ENCODE measurements at regions of chr9 and their contacts with region 1.

Region 1: DNA sequence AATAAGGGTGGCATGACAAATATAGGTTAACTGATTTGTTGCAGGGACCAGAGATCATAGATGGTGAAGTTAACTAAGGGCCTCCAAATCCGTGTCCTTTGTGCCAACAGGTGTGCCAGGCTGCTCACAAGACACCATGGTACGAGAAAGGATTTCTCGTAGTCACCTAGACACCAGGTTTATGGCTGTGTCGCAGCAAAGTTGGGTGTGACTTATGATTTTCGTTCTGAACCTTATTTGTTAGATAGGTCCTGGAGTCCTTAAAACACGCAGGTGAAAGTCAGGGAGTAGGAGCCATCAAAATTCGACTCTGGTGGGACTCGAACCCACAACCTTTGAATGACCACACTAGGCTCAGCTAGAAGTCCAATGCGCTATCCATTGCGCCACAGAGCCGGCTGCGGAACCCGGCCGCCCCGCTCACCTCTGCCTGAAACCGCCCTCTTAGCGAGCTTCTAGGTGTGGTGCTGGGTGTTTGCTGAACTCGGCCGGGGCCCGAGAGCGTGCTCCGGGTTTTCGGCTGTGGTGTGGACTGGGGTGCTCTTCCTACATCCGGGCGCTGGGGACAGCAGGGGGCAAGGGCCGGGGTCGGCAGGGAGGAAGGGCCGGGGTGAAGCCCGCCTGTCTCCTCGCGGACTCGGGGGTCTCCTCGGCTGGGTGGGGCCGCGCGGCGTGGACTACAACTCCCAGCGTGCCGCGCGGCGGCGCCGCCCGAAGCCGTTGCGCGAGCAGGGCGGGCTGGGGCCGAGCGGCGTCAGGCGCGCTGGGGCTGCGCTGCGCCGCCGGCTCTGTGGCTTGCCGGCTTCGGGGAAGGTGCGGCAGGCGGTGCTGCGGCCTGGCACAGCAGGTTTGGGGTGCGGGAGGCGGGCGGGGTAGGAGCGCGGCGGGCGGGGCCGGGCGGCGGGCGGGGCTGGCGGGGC is at the start of gene SLC27A4:
- DNase-seq: peak; percentile 95
- H3K4me3 ChIP-seq: peak within 1 kb of the TSS; percentile 66 to 97 (median 95)
- H3K27ac ChIP-seq: peak within 1 kb of the TSS; percentile 75
- H3K4me1 ChIP-seq: peaks cover 4% of the 10 kb centered on the region
- H3K27me3 ChIP-seq: no peaks in the 10 kb centered on the region
- CTCF ChIP-seq: no peak
- total RNA-seq, gene SLC27A4: 28.2 to 35.2 TPM

Region 2: DNA sequence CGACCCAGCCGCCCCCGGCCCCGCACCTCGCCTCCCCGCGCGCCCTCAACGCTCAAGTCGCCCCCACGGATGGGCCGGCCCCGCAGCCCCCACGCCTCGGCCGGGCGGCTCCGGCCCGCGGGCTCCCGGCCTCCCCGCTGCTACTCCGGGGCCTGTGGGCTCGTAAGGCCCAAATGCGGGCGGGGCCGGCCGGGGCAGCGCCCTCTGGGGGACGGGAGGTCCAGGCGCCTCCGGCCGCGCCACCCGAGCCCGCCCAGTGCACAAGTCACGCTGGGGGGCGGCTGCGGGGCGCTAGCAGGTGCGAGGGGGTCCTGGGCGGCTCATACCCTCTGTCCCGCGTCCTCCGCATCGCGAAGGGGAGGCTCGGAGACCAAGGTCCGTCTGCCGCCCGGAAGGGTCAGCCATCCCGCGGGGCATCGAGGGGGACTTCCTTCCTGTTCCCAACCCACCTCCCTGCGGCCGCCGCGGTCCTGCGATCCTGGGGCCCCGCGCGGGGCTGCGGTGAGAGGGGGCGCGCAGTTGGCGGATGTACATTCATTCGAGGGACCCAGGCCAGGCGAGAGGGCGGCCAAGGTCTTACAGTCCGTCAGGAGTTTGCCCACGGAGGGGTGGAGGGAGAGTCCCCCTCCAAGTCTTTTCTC is 148.5 kb before region 1 on chr9 and contains the start of gene CIZ1:
- CTCF ChIA-PET with region 1: no interaction called
- dilution Hi-C with region 1: no loop called
- in situ Hi-C with region 1: no loop called
- intact Hi-C with region 1: loop called (anchors 2 kb)
- DNase-seq: peak; percentile 63
- H3K4me3 ChIP-seq: peak within 1 kb of the TSS; percentile 84 to 90 (median 88)
- H3K27ac ChIP-seq: peak within 1 kb of the TSS; percentile 26
- H3K4me1 ChIP-seq: peaks cover 19% of the 10 kb centered on the region
- H3K27me3 ChIP-seq: no peaks in the 10 kb centered on the region
- CTCF ChIP-seq: peak; percentile 41 to 72
- total RNA-seq, gene CIZ1: 36.0 to 109 TPM

Region 3: DNA sequence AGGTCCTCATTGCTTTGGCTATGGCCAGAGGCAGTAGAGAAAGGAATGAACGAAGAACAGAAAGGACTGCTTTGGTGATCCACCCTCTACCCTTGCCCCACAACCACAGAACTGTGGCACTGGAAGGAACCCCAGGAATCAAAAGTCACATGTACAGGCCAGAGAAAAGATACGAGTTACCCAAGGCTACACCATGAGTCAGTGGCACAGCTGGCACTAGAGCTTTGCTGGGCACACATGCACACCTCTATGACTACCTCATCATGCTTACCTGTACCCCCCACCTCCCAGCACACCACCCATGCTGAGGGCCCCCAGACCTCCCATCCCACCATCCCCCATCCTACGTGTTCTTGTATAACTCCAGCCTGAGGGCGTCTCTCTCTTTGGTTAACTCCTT is 77.3 kb before region 1 on chr9:
- CTCF ChIA-PET with region 1: no interaction called
- dilution Hi-C with region 1: loop called (anchors 5 kb)
- in situ Hi-C with region 1: no loop called
- intact Hi-C with region 1: no loop called
- DNase-seq: no peak
- H3K4me3 ChIP-seq: no peak overlapping the region
- H3K27ac ChIP-seq: no peak overlapping the region
- H3K4me1 ChIP-seq: no peaks in the 10 kb centered on the region
- H3K27me3 ChIP-seq: no peaks in the 10 kb centered on the region
- CTCF ChIP-seq: no peak

Region 4: GRCh38 chr9:128296337-128297220 is 43.5 kb before region 1 on chr9:
- CTCF ChIA-PET with region 1: interaction called, 12 read pairs
- dilution Hi-C with region 1: no loop called
- in situ Hi-C with region 1: loop called in 1 of 2 experiments (anchors 5 kb)
- intact Hi-C with region 1: loop called (anchors 1 kb)
- DNase-seq: no peak
- H3K4me3 ChIP-seq: no peak overlapping the region
- H3K27ac ChIP-seq: no peak overlapping the region
- H3K4me1 ChIP-seq: no peaks in the 10 kb centered on the region
- H3K27me3 ChIP-seq: no peaks in the 10 kb centered on the region
- CTCF ChIP-seq: no peak

Region 5: GRCh38 chr9:128322404-128323211 is 17.4 kb before region 1 on chr9 and contains the starts of genes COQ4 and TRUB2:
- CTCF ChIA-PET with region 1: interaction called, 3 read pairs
- dilution Hi-C with region 1: no loop called
- in situ Hi-C with region 1: no loop called
- intact Hi-C with region 1: loop called (anchors 1 kb)
- DNase-seq: peak; percentile 94
- H3K4me3 ChIP-seq: peak within 1 kb of the TSS; percentile 68 to 97 (median 68)
- H3K27ac ChIP-seq: peak within 1 kb of the TSS; percentile 88
- H3K4me1 ChIP-seq: peaks cover 14% of the 10 kb centered on the region
- H3K27me3 ChIP-seq: no peaks in the 10 kb centered on the region
- CTCF ChIP-seq: no peak
- total RNA-seq, gene COQ4: 32.7 to 33.7 TPM
- total RNA-seq, gene TRUB2: 14.7 to 28.6 TPM

Region 6: DNA sequence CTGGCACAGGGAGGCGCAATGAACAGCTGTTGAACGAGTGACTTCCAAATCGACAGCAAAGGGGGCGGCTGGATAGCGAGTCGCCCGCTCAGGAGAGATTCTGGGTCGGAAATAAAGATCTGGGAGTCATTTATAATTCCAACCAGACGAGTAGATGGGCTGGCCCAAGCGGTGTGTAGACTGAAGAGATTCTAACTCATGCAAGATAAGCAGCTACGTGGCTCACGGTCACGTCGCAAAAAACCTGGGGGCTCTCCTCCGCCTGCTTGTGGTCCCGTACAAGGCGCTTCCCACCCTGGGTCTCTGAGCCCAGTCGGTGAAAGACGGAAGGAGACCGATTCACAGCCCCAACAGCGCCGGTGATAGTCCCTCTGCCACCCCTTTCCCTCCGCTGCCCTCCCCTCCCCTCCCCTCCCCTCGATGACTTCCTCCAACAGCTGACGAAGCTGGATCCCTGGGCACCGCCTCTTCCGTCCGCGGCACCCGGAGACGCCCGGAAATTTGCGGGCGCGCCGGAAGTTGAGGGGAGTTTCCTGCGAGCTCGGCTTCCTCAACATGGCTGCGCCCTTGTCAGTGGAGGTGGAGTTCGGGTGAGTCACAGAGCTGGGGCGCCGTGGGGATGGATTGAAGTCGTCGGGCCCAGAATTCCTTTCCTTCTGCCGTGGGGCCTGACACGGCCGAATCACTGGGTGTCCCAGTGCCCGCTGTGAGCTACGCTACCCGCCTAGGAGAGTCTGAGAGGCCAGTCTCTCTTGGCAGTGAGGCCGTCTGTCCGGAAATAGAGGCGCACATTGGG is 31.0 kb after region 1 on chr9 and contains the start of gene URM1:
- CTCF ChIA-PET with region 1: no interaction called
- dilution Hi-C with region 1: no loop called
- in situ Hi-C with region 1: no loop called
- intact Hi-C with region 1: loop called (anchors 2 kb)
- DNase-seq: peak; percentile 98
- H3K4me3 ChIP-seq: peak within 1 kb of the TSS; percentile 86 to 94 (median 92)
- H3K27ac ChIP-seq: peak within 1 kb of the TSS; percentile 74
- H3K4me1 ChIP-seq: peaks cover 15% of the 10 kb centered on the region
- H3K27me3 ChIP-seq: no peaks in the 10 kb centered on the region
- CTCF ChIP-seq: peak in 1 of 2 donors; percentile 22
- total RNA-seq, gene URM1: 24.5 to 53.7 TPM

Region 7: GRCh38 chr9:128409998-128410397 is 70.0 kb after region 1 on chr9:
- CTCF ChIA-PET with region 1: no interaction called
- dilution Hi-C with region 1: no loop called
- in situ Hi-C with region 1: no loop called
- intact Hi-C with region 1: no loop called
- DNase-seq: peak; percentile 23
- H3K4me3 ChIP-seq: no peak overlapping the region
- H3K27ac ChIP-seq: no peak overlapping the region
- H3K4me1 ChIP-seq: no peaks in the 10 kb centered on the region
- H3K27me3 ChIP-seq: no peaks in the 10 kb centered on the region
- CTCF ChIP-seq: peak in 1 of 2 donors; percentile 23